ENCODE measurements at regions of chr6 and their contacts with region 1.

Region 1: DNA sequence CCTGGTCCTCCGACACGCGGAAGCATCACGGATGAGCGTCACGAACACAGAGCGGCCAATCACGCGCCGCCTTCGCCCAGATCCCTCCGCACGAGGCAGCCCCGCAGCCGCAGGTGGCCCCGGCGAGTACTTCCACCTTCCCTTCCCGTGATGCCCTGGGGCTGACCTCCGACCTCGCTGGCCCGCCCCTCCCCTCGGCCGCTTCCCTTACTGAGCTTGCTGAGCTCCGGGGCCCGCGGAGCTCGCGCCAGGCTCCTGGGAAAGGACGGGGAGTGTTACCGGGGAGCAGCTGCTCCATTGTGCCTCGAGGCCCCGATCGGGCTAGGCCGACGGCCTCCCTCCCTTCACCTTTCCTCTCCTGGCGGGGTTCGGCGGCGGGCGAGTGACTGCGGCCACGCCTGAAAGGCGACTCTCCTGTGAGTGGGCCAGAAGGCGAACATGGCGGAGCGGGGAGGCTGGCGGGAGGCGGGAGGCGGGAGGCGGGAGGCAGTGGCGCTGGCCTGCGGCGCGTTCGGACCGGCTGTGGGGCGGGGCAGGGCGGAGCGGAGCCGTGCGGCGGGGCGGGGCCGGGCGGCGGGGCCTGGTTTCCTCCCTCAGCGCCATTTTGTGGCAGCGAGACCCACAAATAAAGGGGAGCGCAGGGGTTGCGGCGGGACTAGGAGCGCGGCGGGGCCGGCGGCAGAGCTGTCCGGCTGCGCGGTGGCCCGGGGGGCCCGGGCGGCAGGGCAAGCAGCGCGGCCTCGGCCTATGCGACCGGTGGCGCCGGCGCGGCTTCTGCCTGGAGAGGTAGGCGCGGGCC is at the start of gene WTAP:
- DNase-seq: peak; percentile 64
- ATAC-seq: peak; percentile 94
- H3K4me3 ChIP-seq: peak within 1 kb of the TSS; percentile 85 to 96
- H3K27ac ChIP-seq: peak within 1 kb of the TSS; percentile 100
- H3K4me1 ChIP-seq: peaks cover 30% of the 10 kb centered on the region
- H3K27me3 ChIP-seq: no peaks in the 10 kb centered on the region
- CTCF ChIP-seq: no peak
- total RNA-seq, gene WTAP: 112 TPM

Region 2: GRCh38 chr6:158002951-158003853 is 1723.9 kb before region 1 on chr6:
- CTCF ChIA-PET with region 1: no interaction called
- POLR2A ChIA-PET with region 1: interaction called, 18 read pairs
- in situ Hi-C with region 1: no loop called
- intact Hi-C with region 1: no loop called
- DNase-seq: no peak
- ATAC-seq: peak; percentile 36
- H3K4me3 ChIP-seq: no peak overlapping the region
- H3K27ac ChIP-seq: peak overlapping the region; percentile 23
- H3K4me1 ChIP-seq: peaks cover 74% of the 10 kb centered on the region
- H3K27me3 ChIP-seq: no peaks in the 10 kb centered on the region
- CTCF ChIP-seq: no peak

Region 3: DNA sequence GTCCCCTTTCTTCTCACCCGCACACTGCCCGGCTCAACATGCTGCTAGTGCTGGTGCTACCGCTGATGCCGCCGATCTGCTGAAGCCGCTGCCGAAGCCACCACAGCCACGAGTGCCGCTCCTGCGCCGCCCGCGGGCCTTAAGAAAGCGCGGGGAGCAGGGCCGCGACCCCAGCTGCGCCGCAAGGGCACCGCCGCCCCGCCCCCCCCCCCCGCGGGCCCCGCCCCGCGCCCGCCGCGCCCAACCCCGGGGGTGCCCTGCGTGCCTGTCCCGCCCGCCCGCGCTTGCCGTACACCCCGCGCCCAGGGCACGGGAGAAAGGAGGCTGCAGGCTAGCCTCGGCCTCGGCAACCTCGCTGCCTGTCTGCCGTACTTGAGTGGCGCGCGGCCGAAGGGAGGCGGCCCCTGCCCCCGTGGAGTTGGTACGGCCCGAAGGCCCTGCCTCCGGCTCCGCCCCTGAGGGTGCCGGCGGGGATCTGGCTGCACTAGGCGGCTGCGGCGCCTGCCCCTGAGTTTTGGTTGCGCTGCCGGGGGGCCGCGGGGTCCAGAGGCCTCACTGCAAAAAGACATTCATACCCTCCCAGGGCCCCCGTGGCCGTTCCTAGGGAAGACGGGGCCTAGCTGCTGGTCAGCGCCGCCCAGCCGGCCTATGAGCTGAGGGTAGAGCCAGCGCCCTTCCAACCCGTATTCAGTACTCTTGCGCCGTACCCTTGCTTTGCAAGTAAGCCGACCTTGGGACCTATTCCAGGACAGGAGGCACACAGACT is 33.8 kb before region 1 on chr6 and contains the start of gene SOD2:
- CTCF ChIA-PET with region 1: no interaction called
- POLR2A ChIA-PET with region 1: interaction called, 4 read pairs
- in situ Hi-C with region 1: no loop called
- intact Hi-C with region 1: loop called (anchors 5 kb)
- DNase-seq: no peak
- ATAC-seq: peak; percentile 92
- H3K4me3 ChIP-seq: peak within 1 kb of the TSS; percentile 69 to 72
- H3K27ac ChIP-seq: peak within 1 kb of the TSS; percentile 95
- H3K4me1 ChIP-seq: peaks cover 21% of the 10 kb centered on the region
- H3K27me3 ChIP-seq: no peaks in the 10 kb centered on the region
- CTCF ChIP-seq: no peak
- total RNA-seq, gene SOD2: 180 TPM

Region 4: DNA sequence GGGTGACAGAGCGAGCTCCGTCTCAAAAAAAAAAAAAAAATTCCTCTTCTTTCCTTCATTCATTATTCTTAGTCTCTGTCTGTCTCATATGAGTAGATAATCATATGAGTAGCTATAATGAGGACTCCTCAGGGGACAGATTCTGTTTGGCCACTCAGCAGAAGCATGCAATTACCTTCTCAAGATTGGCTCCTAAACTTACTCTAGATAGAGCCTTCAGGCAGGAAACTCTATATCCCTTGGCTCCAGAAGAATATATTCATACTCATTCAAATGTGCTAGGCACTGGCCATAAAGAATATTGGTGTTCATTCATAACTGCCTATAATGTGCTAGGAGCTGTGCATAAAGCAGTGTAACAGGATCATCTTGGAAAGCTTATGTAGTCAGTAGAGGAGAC is 32.5 kb after region 1 on chr6:
- CTCF ChIA-PET with region 1: no interaction called
- POLR2A ChIA-PET with region 1: interaction called, 15 read pairs
- in situ Hi-C with region 1: no loop called
- intact Hi-C with region 1: no loop called
- DNase-seq: no peak
- ATAC-seq: no peak
- H3K4me3 ChIP-seq: no peak overlapping the region
- H3K27ac ChIP-seq: peak overlapping the region; percentile 94
- H3K4me1 ChIP-seq: peaks cover 23% of the 10 kb centered on the region
- H3K27me3 ChIP-seq: no peaks in the 10 kb centered on the region
- CTCF ChIP-seq: no peak

Region 5: DNA sequence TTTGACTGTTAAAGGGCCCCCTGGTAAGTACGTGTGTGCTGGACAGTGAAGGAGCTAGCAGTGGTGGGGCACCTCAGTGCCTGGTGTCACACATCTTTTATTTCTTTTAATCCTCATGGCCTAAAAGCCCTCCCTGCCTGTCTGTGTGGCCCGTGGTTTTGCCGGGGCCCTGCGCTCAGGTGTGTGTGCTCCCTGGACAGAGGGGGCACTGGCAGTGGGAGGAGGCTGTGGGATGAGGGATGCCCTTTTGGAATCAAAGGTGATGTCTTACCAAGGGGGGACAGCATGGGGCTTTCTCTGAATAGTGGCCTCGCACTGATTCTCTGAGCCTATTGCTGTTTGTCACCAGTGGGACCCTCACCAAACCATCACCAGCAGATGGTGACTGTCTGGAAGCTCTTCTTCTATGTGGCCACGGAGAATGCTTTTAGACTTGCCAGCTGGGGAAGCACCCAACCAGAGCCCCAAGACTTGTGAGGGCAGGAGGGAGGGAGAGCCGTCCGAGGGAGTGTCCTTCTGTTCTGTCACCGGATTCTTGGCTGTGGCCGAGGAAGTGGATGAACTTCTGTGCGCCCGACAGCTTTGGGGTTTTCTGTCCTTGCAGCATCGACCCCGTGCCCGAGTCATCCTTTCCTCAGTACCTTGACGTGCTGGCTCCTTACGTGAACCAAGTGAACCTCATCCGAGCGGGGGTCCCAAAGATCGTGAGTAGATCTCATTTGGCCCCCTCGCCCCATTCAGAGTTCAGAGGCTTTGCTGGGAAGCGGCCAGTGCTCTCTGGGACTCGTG is 91.0 kb after region 1 on chr6:
- CTCF ChIA-PET with region 1: no interaction called
- POLR2A ChIA-PET with region 1: no interaction called
- in situ Hi-C with region 1: no loop called
- intact Hi-C with region 1: no loop called
- DNase-seq: no peak
- ATAC-seq: no peak
- H3K4me3 ChIP-seq: no peak overlapping the region
- H3K27ac ChIP-seq: no peak overlapping the region
- H3K4me1 ChIP-seq: no peaks in the 10 kb centered on the region
- H3K27me3 ChIP-seq: no peaks in the 10 kb centered on the region
- CTCF ChIP-seq: no peak